ENCODE measurements at regions of chr3 and their contacts with region 1.

Region 1: GRCh38 chr3:129016356-129016719 is 15.2 kb downstream of the EFCC1 start:
- DNase-seq: peak; percentile 49 to 80 (median 66)
- H3K4me3 ChIP-seq: peak overlapping the region; percentile 60
- H3K4me3 Mint-ChIP-seq: peak overlapping the region; percentile 66 to 85 (median 77)
- H3K27ac ChIP-seq: peak overlapping the region; percentile 57
- H3K27ac Mint-ChIP-seq: peak overlapping the region; percentile 82 to 100 (median 94)
- H3K4me1 ChIP-seq: peaks cover 40% of the 10 kb centered on the region
- H3K4me1 Mint-ChIP-seq: peaks cover 42 to 50% (median 48%) of the 10 kb centered on the region in 3 donors
- H3K27me3 ChIP-seq: no peaks in the 10 kb centered on the region
- H3K27me3 Mint-ChIP-seq: no peaks in the 10 kb centered on the region

Region 2: GRCh38 chr3:128942161-128942876 is 74.0 kb before region 1 on chr3:
- CTCF ChIA-PET with region 1: no interaction called
- POLR2A ChIA-PET with region 1: no interaction called
- DNase-seq: no peak
- H3K4me3 ChIP-seq: no peak overlapping the region
- H3K4me3 Mint-ChIP-seq: no peak overlapping the region
- H3K27ac ChIP-seq: no peak overlapping the region
- H3K27ac Mint-ChIP-seq: no peak overlapping the region
- H3K4me1 ChIP-seq: no peaks in the 10 kb centered on the region
- H3K4me1 Mint-ChIP-seq: no peaks in the 10 kb centered on the region
- H3K27me3 ChIP-seq: peaks cover 3% of the 10 kb centered on the region
- H3K27me3 Mint-ChIP-seq: peaks cover 15 to 25% of the 10 kb centered on the region in 2 donors

Region 3: DNA sequence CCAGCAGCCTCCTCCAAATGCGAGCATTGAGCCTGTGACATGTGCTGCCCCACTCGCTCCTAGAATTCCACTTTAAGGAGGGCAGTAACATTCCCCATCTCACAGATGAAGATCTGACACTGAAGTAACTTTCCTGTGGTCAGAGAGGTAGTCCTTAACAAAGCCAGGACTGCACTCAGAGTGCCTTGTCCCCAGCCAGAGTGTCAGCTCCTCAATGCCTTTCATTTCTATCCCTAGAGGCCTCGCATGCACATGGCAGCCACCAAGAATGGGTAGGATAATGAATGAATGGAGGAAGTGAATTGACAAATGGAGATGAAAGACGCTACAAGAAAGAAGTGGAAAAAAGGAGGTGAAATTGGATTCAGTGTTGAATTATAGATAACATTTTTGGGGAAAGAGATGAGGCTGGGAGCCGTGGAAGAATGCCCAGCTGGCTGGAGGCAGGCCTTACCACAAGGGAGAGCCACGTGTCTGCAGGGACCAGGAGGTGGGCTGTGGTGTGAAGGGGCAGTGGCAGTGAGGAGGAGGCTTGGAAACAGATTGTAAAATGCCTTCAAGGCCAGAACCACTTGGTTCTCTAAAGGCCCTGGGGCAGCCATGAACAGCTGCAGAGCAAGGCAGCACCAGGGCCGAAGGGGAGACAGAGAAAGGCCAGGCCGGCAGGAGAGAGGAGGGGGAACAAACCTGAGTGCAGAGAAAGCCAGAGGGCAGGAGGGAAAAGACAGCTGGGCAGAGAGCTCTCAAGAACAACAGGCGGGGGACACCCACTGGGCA is 32.9 kb before region 1 on chr3:
- CTCF ChIA-PET with region 1: no interaction called
- POLR2A ChIA-PET with region 1: no interaction called
- DNase-seq: no peak
- H3K4me3 ChIP-seq: no peak overlapping the region
- H3K4me3 Mint-ChIP-seq: no peak overlapping the region
- H3K27ac ChIP-seq: no peak overlapping the region
- H3K27ac Mint-ChIP-seq: peak overlapping the region in 1 of 8 donors; percentile 14
- H3K4me1 ChIP-seq: no peaks in the 10 kb centered on the region
- H3K4me1 Mint-ChIP-seq: no peaks in the 10 kb centered on the region
- H3K27me3 ChIP-seq: no peaks in the 10 kb centered on the region
- H3K27me3 Mint-ChIP-seq: peaks cover 3 to 4% of the 10 kb centered on the region in 2 donors

Region 4: DNA sequence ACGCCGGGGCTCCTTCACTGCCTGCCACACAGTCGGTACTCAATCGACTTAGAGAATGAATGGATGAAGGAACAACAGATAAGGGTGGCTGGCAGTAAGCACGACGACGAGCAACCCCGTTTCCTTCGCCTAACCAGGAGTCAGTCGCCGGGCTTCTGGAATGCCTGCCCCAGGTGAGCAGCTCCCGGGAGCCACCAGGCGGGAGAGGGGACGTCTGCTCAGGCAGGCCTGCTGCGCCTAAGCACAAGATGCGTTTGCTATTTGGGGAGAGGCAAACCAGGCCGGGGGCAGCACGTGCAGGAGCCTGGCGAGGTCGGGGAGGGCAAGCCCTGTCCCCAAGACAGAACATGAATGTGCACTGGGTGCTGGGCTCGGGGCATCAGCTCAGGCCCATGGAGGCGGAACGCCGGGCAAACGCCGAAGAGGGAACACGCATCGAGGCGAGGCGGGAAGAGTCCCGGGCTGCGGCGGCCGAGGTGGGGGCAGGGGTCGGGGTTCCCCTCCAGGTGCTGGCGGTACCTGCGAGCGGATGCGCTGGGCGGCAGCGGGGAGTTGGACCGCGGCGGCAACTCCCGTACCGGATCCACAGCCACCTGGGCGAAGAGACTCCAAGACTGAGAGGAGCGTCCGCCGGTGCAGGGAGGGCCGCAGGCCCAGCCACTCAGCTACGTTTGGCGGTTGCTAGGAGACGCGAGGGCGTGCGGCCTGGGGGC is 22.7 kb before region 1 on chr3 and contains the start of gene CFAP92:
- CTCF ChIA-PET with region 1: interaction called, 35 read pairs
- POLR2A ChIA-PET with region 1: interaction called, 10 read pairs
- DNase-seq: peak; percentile 83 to 94 (median 89)
- H3K4me3 ChIP-seq: peak within 1 kb of the TSS; percentile 53
- H3K4me3 Mint-ChIP-seq: peak within 1 kb of the TSS; percentile 66 to 83 (median 77)
- H3K27ac ChIP-seq: no peak within 1 kb of the TSS
- H3K27ac Mint-ChIP-seq: peak within 1 kb of the TSS; percentile 50 to 96 (median 78)
- H3K4me1 ChIP-seq: peaks cover 23% of the 10 kb centered on the region
- H3K4me1 Mint-ChIP-seq: peaks cover 8 to 16% (median 9%) of the 10 kb centered on the region in 3 donors
- H3K27me3 ChIP-seq: no peaks in the 10 kb centered on the region
- H3K27me3 Mint-ChIP-seq: peaks cover 2 to 5% of the 10 kb centered on the region in 2 donors
- total RNA-seq, gene CFAP92: 0.13 TPM in 1 of 2 experiments, not detected in the other

Region 5: DNA sequence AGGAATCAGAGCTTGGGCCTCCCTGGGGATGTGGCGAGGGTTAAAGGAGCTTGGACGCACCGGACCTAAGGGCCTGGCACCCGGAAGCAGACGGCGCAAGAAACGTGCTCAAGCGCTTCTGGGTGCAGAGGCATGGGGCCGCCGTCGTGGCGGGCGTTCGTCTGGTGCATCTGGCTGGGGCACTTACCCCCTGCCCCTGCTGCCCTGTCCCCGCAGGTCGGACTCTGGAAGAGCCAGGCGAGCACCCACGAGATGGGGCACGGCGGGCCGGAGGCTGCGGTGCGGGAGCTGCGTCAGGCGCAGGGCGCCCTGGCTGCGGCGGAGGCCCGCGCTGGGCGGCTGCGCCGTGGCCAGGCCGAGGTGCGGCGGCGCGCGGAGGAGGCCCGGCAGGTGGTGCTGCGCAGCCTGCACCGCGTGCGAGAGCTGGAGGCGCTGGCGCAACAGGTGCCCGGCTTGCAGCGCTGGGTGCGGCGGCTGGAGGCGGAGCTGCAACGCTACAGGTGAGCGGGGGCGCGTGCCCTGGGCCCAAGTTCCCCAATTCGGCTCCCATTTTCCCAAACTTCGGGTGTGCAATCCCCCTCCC is 12.7 kb before region 1 on chr3:
- CTCF ChIA-PET with region 1: interaction called, 98 read pairs
- POLR2A ChIA-PET with region 1: interaction called, 18 read pairs
- DNase-seq: peak; percentile 26 to 70 (median 55)
- H3K4me3 ChIP-seq: no peak overlapping the region
- H3K4me3 Mint-ChIP-seq: peak overlapping the region in 5 of 7 donors; percentile 29 to 63 (median 48)
- H3K27ac ChIP-seq: no peak overlapping the region
- H3K27ac Mint-ChIP-seq: peak overlapping the region in 1 of 8 donors; percentile 38
- H3K4me1 ChIP-seq: peaks cover 16% of the 10 kb centered on the region
- H3K4me1 Mint-ChIP-seq: peaks cover 23 to 43% (median 30%) of the 10 kb centered on the region in 3 donors
- H3K27me3 ChIP-seq: peaks cover 14% of the 10 kb centered on the region
- H3K27me3 Mint-ChIP-seq: peaks cover 32 to 33% of the 10 kb centered on the region in 2 donors

Region 6: GRCh38 chr3:129026728-129027543 is 10.6 kb after region 1 on chr3:
- CTCF ChIA-PET with region 1: interaction called, 96 read pairs
- POLR2A ChIA-PET with region 1: interaction called, 50 read pairs
- DNase-seq: peak; percentile 89 to 95 (median 93)
- H3K4me3 ChIP-seq: peak overlapping the region; percentile 66
- H3K4me3 Mint-ChIP-seq: peak overlapping the region; percentile 26 to 93 (median 85)
- H3K27ac ChIP-seq: peak overlapping the region; percentile 77
- H3K27ac Mint-ChIP-seq: peak overlapping the region; percentile 92 to 99 (median 98)
- H3K4me1 ChIP-seq: peaks cover 16% of the 10 kb centered on the region
- H3K4me1 Mint-ChIP-seq: peaks cover 24 to 34% (median 24%) of the 10 kb centered on the region in 3 donors
- H3K27me3 ChIP-seq: no peaks in the 10 kb centered on the region
- H3K27me3 Mint-ChIP-seq: no peaks in the 10 kb centered on the region

Region 7: DNA sequence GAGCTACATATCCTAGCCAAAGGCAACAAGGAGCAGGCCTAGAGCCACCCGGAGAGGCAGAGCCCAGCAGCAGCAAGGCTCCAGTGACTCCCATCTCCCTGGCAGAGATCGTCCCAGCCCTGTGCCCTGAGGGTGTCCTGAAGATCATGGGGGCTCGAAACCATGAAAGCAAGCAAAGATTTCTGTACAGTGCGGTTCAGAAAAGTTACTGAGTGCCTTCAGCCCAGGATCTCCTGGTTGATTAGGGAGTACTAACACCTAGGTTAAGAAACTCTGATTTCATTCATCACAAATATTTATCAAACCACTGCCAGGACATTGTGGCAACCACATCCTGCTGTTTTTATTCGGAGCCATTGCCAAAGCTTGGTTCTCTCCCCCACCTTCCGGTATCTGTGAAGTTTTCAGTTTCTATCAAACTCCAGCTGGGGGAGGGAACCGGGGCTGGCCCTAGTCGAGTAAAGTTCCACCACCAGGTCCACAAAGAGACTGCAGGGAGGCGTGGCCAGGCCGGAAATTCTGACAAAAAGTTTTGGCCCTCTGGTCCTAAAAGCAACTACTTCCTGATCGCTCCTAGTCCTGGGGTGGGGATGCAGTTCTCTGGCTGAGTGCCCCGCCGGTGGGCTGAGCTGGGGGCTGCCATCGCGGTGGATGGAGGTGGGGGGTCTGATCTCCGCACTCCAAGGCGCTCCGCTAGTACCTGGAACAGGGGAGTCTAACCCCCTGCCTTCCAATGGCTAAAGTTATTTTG is 104.1 kb after region 1 on chr3:
- CTCF ChIA-PET with region 1: interaction called, 11 read pairs
- POLR2A ChIA-PET with region 1: interaction called, 16 read pairs
- DNase-seq: peak; percentile 81 to 94 (median 93)
- H3K4me3 ChIP-seq: peak overlapping the region; percentile 93
- H3K4me3 Mint-ChIP-seq: peak overlapping the region; percentile 83 to 95 (median 90)
- H3K27ac ChIP-seq: peak overlapping the region; percentile 80
- H3K27ac Mint-ChIP-seq: peak overlapping the region; percentile 87 to 98 (median 96)
- H3K4me1 ChIP-seq: peaks cover 45% of the 10 kb centered on the region
- H3K4me1 Mint-ChIP-seq: peaks cover 60 to 65% (median 62%) of the 10 kb centered on the region in 3 donors
- H3K27me3 ChIP-seq: no peaks in the 10 kb centered on the region
- H3K27me3 Mint-ChIP-seq: no peaks in the 10 kb centered on the region

Region 8: GRCh38 chr3:129249276-129250065 is 233.1 kb after region 1 on chr3 and contains the start of gene COPG1:
- CTCF ChIA-PET with region 1: interaction called, 35 read pairs
- POLR2A ChIA-PET with region 1: interaction called, 4 read pairs
- DNase-seq: peak; percentile 77 to 91 (median 88)
- H3K4me3 ChIP-seq: peak within 1 kb of the TSS; percentile 100
- H3K4me3 Mint-ChIP-seq: peak within 1 kb of the TSS; percentile 96 to 100 (median 97)
- H3K27ac ChIP-seq: peak within 1 kb of the TSS; percentile 97
- H3K27ac Mint-ChIP-seq: peak within 1 kb of the TSS; percentile 95 to 100 (median 98)
- H3K4me1 ChIP-seq: peaks cover 25% of the 10 kb centered on the region
- H3K4me1 Mint-ChIP-seq: peaks cover 37 to 55% (median 42%) of the 10 kb centered on the region in 3 donors
- H3K27me3 ChIP-seq: no peaks in the 10 kb centered on the region
- H3K27me3 Mint-ChIP-seq: peaks cover 0 to 2% of the 10 kb centered on the region in 2 donors
- total RNA-seq, gene COPG1: 134 to 136 TPM

Region 9: GRCh38 chr3:129316131-129317013 is 300.0 kb after region 1 on chr3:
- CTCF ChIA-PET with region 1: interaction called, 13 read pairs
- POLR2A ChIA-PET with region 1: interaction called, 7 read pairs
- DNase-seq: peak; percentile 74 to 91 (median 78)
- H3K4me3 ChIP-seq: peak overlapping the region; percentile 84
- H3K4me3 Mint-ChIP-seq: peak overlapping the region; percentile 86 to 98 (median 91)
- H3K27ac ChIP-seq: peak overlapping the region; percentile 75
- H3K27ac Mint-ChIP-seq: peak overlapping the region in 7 of 8 donors; percentile 34 to 81 (median 75)
- H3K4me1 ChIP-seq: peaks cover 23% of the 10 kb centered on the region
- H3K4me1 Mint-ChIP-seq: peaks cover 21 to 34% (median 29%) of the 10 kb centered on the region in 3 donors
- H3K27me3 ChIP-seq: no peaks in the 10 kb centered on the region
- H3K27me3 Mint-ChIP-seq: peaks cover 0 to 3% of the 10 kb centered on the region in 2 donors